ENCODE measurements at regions of chr9 and their contacts with region 1.

Region 1: DNA sequence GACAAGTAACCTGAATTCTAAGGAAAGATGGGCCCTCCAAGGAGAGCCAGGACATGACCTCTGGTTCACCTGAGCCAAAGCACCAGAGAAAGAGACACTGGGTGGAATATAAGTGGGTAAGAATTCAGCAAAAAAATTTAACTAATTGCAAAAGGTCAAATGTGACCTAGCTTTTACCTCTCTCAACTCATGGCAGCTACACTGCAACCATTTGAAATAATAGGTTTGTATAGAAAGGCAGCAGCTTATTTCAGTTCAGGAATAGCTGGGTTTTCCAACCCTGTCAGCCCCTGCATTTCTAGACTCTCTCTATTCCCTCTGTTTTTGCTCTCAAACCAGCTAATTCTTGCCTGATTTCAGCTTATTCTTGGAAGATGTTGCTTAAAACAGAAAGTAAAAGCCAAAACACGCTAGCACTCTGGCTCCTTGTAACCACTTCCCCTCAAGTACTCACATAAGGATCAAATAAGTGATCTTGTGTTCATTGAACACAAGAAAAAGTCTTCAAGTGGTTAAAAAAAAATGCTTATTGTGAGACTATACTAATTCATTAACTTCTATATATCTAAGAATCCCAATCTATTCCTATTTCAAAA is 101.1 kb upstream of the NR4A3 start:
- DNase-seq: no peak
- ATAC-seq: peak; percentile 66
- H3K4me3 Mint-ChIP-seq: peak overlapping the region; percentile 73
- H3K27ac Mint-ChIP-seq: peak overlapping the region; percentile 69
- H3K4me1 Mint-ChIP-seq: peaks cover 27% of the 10 kb centered on the region
- H3K27me3 Mint-ChIP-seq: no peaks in the 10 kb centered on the region
- CTCF ChIP-seq: no peak

Region 2: DNA sequence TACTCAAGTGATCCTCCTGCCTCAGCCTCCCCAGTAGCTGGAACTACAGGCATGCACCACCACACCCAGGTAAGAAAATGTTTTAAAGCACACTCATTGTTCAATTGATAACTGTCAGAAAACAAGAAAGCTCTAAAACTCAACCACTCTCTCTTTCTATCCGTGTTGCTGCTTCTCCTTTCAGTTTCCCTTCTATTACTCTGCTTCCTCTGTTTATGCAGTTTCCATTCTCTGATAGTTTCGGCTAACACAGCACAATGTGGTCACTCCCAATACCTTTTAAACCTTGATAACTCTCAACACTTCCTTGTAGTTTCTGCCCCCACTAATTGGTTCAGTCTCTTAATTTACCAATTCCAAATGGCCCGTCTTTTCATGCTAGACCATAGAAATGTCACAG is 41.9 kb after region 1 on chr9:
- CTCF ChIA-PET with region 1: no interaction called
- POLR2A ChIA-PET with region 1: interaction called, 4 read pairs
- intact Hi-C with region 1: loop called (anchors 5 kb)
- DNase-seq: no peak
- ATAC-seq: peak; percentile 98
- H3K4me3 Mint-ChIP-seq: no peak overlapping the region
- H3K27ac Mint-ChIP-seq: no peak overlapping the region
- H3K4me1 Mint-ChIP-seq: no peaks in the 10 kb centered on the region
- H3K27me3 Mint-ChIP-seq: no peaks in the 10 kb centered on the region
- CTCF ChIP-seq: no peak